GM13977 (cell line): ENCODE measurements at regions of chr6 and their contacts with region 1.

Region 1: DNA sequence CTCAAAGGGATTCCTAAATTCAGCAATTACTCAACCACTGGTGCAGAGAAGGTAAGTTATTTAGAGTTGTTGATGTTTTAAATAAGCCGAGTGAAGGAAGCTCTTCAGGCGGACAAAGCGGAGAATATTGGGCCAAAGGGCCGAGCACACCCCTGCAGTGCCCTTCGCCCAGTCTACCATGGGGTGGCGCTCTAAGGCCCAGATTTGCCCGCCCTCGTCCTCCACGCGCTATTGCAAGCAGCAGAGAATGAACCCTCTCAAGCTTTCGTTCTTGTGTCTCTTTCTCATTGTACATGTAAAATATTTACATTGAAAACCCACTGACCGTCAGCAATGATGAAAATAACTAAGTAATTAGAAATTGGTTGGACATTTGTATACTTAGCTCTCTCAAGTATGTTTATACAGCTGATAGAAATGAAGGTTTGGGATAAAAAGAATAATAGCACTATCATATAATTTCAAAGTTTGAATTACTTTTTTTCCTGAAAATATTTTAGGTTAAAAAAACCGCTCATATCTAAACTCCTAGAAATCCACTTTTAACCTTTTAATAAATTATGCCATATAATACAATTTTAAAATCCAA is 195.0 kb upstream of the CEP162 start:
- DNase-seq: peak; percentile 9
- CTCF ChIP-seq: peak; percentile 64

Region 2: DNA sequence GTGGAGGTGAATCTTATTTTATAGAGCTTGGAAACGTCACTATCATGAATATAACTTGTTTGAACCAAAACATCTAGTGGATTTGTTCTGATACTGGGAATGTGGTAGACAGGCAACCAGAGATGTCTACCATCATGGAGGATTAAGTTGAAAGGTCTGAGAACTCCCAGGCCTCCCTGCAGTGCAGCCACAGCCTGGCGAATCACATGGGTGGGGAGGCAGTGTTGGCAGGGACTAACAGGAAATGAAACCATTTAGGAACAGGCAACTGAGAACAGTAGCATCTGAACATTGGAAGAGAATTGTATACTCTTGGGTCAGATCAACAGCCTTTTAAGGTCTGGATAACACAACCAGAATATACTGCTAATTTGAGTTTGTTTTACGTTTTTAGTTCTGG is 172.8 kb before region 1 on chr6:
- in situ Hi-C with region 1: loop called (anchors 25 kb)
- DNase-seq: no peak
- CTCF ChIP-seq: no peak

Region 3: GRCh38 chr6:84910906-84911607 is 488.6 kb after region 1 on chr6:
- in situ Hi-C with region 1: no loop called
- DNase-seq: no peak
- CTCF ChIP-seq: no peak